A549 (cell line): ENCODE measurements at regions of chr9 and their contacts with region 1.

Region 1: DNA sequence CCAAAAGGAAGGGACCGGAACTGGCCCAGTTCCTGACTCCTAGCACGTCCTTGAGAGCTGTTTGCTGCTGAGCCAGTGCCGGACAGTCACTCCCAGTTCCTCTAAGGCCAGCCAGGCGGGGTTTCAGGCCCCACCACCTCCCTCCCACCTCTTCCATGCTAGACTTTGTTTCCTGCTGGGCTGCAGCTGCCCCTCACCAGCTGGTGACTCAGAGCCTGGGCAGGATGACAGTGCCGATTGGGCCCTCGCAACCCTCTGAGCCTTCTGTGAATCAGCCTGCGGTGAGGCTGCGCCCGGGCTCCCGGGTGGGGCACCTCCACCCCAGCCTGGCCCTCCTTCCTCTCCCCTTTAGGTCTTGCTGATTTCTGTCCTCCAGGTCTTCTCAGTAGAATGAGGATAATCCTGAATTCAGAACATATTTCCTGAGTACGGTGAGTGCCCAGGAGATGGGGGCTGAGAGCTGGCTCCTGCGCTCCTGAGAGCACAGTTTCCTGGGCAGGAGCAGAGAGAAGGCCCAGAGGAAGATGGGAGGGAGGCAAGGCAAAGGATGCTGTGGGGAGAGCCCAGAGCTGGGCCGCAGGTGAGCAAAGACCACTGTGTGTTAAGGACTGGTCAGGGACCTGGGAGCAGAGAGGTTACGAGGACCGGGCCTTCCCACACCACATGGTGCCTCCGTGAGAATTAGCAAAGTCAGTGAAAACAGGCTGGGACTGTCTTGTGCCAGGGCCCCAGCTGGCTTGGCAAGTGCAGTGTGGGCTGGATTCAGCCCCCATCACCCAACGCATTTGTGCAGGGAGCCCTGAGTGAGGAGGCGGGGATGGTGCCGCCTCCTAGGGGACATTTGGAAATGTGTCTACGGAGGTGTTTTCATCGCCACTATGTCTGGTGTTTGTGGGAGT is 32.9 kb upstream of the STXBP1 start:
- DNase-seq: peak; percentile 87 to 93
- ATAC-seq: peak; percentile 93
- H3K4me3 ChIP-seq: peak overlapping the region; percentile 52
- H3K27ac ChIP-seq: peak overlapping the region; percentile 92 to 100
- H3K4me1 ChIP-seq: peaks cover 70% of the 10 kb centered on the region
- CTCF ChIP-seq: peak; percentile 50
- EP300 ChIP-seq: peak in 1 of 2 experiments; percentile 44; a peak in 1 of 5 replicates
- POLR2A ChIP-seq: peak; percentile 57; the same call in 1 of the 2 replicates
- RAD21 ChIP-seq: peak; percentile 54 to 63

Region 2: DNA sequence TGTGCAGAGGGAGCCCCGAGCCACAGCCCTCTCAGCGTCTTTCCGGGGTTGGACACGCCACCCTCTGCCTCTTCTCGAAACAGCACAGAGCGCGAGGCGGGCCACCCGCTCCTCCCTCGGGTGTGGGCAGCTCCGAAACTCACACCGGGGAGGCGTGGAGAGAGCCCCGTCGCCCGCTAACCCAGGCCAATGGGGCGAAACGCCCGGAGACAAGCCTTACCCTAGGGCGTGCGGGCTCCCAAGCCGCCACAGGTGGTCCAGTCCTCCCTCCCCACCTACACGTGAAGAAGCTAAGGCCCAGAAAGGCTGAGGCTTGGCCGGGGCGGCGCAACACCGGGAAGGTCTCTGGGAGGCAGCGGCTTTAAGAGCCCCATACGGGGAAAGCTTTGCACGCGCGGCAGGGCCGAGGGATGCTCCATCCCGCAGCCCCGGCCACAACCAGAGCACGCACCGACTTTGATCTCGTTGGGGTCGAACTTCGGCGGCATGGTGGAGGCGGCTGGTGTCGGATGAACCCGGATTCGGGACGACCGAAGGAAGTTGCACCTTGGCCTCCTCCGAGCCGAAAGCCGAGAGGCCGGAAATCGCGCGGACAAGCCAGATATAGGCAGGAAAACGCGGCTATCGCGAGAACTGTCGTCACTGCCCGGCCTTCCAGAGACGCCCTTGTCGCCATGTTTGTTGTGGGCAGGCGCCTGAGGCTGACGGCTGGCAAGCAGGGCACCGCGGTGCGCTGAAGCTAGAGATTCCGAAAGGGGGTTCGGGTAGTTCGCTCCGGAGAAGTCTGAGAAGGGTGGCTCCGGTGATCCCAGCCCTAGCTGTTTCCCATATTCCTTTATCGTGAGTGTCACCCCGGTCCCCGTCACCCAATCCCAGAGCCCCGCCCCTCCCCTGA is 128.1 kb before region 1 on chr9 and contains the starts of genes LRSAM1 and RPL12:
- CTCF ChIA-PET with region 1: no interaction called
- POLR2A ChIA-PET with region 1: interaction called, 10 read pairs
- DNase-seq: peak; percentile 96 to 97
- ATAC-seq: peak; percentile 72 to 77
- H3K4me3 ChIP-seq: peak within 1 kb of the TSS; percentile 98
- H3K27ac ChIP-seq: peak within 1 kb of the TSS; percentile 96 to 99
- H3K4me1 ChIP-seq: peaks cover 17% of the 10 kb centered on the region
- CTCF ChIP-seq: no peak
- EP300 ChIP-seq: no peak
- POLR2A ChIP-seq: peak; percentile 99
- RAD21 ChIP-seq: no peak
- polyA plus RNA-seq, gene LRSAM1: 5.1 and 6.4 TPM in 2 replicates
- polyA plus RNA-seq, gene RPL12: 1,891 and 2,198 TPM in 2 replicates

Region 3: DNA sequence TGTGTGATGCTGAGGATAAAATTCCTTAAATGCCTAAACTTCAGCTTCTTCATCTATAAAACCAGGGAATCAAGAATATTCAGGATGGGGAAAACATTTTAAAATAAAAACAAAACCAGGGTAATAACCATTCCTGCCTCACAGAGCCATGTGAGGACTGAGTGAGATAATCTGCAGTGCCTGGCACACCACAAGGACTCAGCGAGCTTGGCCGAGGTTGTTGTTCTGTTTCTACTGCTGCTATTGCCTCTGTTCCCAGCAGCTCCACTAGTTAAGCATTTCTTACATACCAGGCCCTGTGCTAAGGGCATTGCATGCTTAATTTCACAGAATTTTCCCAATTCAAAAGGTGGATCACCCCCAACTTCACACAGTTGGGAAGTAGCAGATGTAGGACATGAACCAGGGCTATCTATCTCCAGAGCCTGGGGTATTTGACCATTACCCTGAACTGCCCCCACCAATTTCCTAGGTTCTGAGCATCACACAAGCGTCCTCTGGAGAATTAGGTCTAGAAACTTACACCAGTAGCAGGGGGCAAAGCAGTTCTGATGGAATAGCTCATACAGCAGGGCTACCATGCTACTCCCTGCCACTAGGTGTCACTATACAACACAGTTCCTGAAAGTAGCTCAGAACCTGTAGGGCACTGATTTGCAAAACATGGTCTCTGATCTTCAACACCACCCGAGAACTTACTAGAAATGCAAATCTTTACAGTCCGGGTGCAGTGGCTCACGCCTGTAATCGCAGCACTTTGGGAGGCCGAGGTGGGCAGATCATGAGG is 53.6 kb before region 1 on chr9:
- CTCF ChIA-PET with region 1: interaction called, 821 read pairs
- POLR2A ChIA-PET with region 1: interaction called, 3 read pairs
- DNase-seq: peak in 1 of 2 experiments; percentile 71
- ATAC-seq: 0 out of 6 replicates have a peak, but pooled peaks of 1 of the 2 experiments have one; percentile 12
- H3K4me3 ChIP-seq: no peak overlapping the region
- H3K27ac ChIP-seq: peak overlapping the region in 1 of 2 experiments; percentile 77; a peak in 2 of 6 replicates
- H3K4me1 ChIP-seq: peaks cover 31% of the 10 kb centered on the region
- CTCF ChIP-seq: peak; percentile 37
- EP300 ChIP-seq: no peak
- POLR2A ChIP-seq: no peak
- RAD21 ChIP-seq: peak; percentile 36 to 60; a peak in 3 of 5 replicates

Region 4: DNA sequence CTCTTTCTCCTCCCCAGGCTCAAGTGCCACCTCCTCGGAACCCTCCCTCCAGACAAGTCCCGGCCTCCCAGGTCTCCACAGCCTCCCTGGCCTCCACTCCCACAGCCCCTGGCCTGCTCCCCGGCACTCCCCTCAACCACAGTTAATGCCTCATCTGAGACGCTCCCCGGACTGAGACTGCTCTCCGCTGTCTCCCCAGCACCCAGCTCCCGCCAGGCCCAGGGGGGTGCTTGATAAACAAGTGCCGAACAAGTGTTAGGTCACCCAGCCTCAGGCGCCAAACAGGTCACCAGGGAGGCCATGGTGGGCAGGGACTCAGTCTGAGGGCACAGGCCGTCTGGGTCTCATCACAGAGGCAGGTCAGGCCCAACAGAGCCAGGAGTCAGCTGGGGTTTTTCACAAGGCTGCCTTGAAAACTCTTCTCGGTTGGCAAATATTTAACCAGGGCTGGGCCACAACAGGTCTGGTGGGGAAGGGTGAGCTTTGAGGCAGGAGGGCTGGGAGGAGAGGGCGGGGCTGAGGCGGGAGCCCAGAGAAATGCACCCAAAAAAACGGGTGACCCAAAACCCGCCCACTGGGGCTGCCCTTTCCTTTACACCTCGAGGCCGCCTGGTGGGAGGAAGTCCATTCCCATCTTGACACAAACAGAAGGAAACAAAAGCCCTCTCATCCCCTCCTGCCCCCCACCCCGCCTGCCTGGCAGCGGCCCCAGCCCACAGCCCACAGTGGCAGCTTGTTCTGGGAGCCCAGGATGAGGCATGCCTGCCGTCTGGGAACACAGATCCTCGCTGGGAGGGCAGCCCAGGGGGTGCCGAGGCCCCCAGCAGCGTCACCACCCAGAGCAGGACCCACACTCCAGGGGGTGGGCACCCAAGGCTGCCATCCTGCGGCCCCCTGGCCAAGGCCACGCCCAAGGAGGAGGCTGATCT is 33.7 kb before region 1 on chr9:
- CTCF ChIA-PET with region 1: interaction called, 88 read pairs
- POLR2A ChIA-PET with region 1: interaction called, 5 read pairs
- DNase-seq: peak; percentile 93 to 94
- ATAC-seq: peak; percentile 76 to 87
- H3K4me3 ChIP-seq: peak overlapping the region; percentile 11; the same call in 1 of the 3 replicates
- H3K27ac ChIP-seq: peak overlapping the region; percentile 94 to 96
- H3K4me1 ChIP-seq: peaks cover 91% of the 10 kb centered on the region
- CTCF ChIP-seq: no peak
- EP300 ChIP-seq: peak; percentile 44 to 67; a peak in 3 of 5 replicates
- POLR2A ChIP-seq: no peak
- RAD21 ChIP-seq: peak in 1 of 2 experiments; percentile 24; a peak in 4 of 5 replicates

Region 5: GRCh38 chr9:127561619-127562500 is 17.3 kb before region 1 on chr9:
- CTCF ChIA-PET with region 1: interaction called, 47 read pairs
- POLR2A ChIA-PET with region 1: interaction called, 19 read pairs
- DNase-seq: peak; percentile 93 to 95
- ATAC-seq: peak; percentile 86 to 91
- H3K4me3 ChIP-seq: peak overlapping the region; percentile 3; the same call in 1 of the 3 replicates
- H3K27ac ChIP-seq: peak overlapping the region; percentile 92 to 93
- H3K4me1 ChIP-seq: peaks cover 97% of the 10 kb centered on the region
- CTCF ChIP-seq: no peak
- EP300 ChIP-seq: peak in 1 of 2 experiments; percentile 78; a peak in 2 of 5 replicates
- POLR2A ChIP-seq: no peak
- RAD21 ChIP-seq: peak; percentile 9 to 39; a peak in 3 of 5 replicates

Region 6: DNA sequence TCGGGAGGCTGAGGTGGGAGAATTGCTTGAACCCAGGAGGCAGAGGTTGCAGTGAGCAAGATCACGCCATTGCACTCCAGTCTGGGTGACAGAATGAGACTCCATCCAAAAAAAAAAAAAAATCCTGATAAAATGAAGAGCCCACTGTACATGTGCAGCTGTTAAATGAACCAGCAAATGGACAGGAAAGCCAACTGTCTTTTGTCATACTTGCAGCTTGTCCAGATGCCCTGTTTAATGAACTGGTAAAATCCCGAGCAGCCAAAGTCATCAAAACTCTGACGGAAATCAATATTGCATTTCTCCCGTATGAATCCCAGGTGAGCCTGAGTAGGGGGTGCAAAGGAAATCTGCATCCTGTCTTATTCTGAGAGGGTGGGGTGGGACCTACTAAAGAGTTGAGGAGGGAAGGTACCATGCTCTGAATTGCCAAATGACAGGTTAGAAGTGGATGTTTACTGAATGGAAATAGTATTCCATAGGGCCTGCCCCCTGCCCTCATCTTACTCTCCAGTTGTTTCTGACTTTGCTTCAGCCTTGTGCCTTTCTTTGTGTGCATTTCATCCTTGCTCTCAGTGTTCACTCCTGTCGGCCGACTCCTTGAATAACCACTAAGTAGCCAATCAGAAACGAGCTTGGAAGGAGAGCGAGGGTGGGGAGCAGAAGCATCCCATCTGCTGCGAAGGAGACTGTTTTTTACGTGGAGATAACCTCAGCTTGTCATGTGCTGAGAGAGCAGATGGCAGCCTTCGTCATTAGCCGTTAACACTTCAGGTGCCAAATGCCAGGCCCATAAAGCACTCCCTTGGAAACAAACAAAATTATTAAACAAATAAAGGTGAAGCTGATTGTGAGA is 81.9 kb after region 1 on chr9:
- CTCF ChIA-PET with region 1: no interaction called
- POLR2A ChIA-PET with region 1: no interaction called
- DNase-seq: no peak
- ATAC-seq: no peak
- H3K4me3 ChIP-seq: no peak overlapping the region
- H3K27ac ChIP-seq: no peak overlapping the region
- H3K4me1 ChIP-seq: no peaks in the 10 kb centered on the region
- CTCF ChIP-seq: no peak
- EP300 ChIP-seq: no peak
- POLR2A ChIP-seq: no peak
- RAD21 ChIP-seq: no peak